ENCODE measurements at regions of chr20 and their contacts with region 1.

Region 1: GRCh38 chr20:8837396-8837795 is 231.5 kb upstream of the PLCB4 start:
- DNase-seq: no peak
- ATAC-seq: no peak
- H3K4me3 ChIP-seq: no peak overlapping the region
- H3K27ac ChIP-seq: no peak overlapping the region
- H3K4me1 ChIP-seq: no peaks in the 10 kb centered on the region
- H3K27me3 ChIP-seq: no peaks in the 10 kb centered on the region
- CTCF ChIP-seq: no peak
- POLR2A ChIP-seq: no peak
- RAD21 ChIP-seq: no peak

Region 2: DNA sequence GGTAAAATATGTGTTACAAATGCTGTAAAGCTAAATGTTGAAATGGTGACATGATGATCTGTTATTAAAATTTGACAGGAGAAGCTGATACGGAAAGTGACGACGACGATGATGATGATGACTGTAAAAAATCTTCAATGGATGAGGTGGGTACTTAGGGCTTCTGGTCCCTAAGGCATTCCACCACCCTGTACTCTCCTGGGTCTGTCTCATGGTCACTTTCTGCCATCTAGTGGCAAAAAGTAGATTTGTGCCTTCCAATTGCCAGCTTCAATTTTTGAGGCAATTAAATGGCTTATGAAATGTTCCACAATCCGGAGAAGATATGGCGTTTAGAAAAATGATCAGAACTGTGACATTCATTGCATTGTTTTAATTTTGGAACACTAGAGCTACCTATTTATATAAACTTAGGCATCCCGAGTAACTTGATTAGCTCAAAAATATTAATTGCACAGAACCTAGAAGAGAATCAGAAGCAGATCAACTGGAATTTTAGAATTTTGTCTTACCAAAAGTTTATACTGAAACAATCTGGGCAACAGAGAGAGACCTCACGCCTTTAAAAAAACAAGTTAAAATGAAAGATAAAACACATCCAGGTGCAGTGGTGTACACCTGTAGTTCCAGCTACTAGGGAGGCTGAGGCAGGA is 115.0 kb before region 1 on chr20:
- CTCF ChIA-PET with region 1: no interaction called
- POLR2A ChIA-PET with region 1: no interaction called
- RAD21 ChIA-PET with region 1: no interaction called
- intact Hi-C with region 1: no loop called
- DNase-seq: peak; percentile 59
- ATAC-seq: peak; percentile 91
- H3K4me3 ChIP-seq: no peak overlapping the region
- H3K27ac ChIP-seq: no peak overlapping the region
- H3K4me1 ChIP-seq: no peaks in the 10 kb centered on the region
- H3K27me3 ChIP-seq: no peaks in the 10 kb centered on the region
- CTCF ChIP-seq: peak; percentile 52 to 83 (median 71); a peak in 5 of 6 replicates
- POLR2A ChIP-seq: no peak
- RAD21 ChIP-seq: peak; percentile 82

Region 3: GRCh38 chr20:8879669-8880068 is 42.3 kb after region 1 on chr20:
- CTCF ChIA-PET with region 1: no interaction called
- POLR2A ChIA-PET with region 1: no interaction called
- RAD21 ChIA-PET with region 1: no interaction called
- intact Hi-C with region 1: loop called (anchors 1 kb)
- DNase-seq: no peak
- ATAC-seq: no peak
- H3K4me3 ChIP-seq: no peak overlapping the region
- H3K27ac ChIP-seq: no peak overlapping the region
- H3K4me1 ChIP-seq: no peaks in the 10 kb centered on the region
- H3K27me3 ChIP-seq: no peaks in the 10 kb centered on the region
- CTCF ChIP-seq: no peak
- POLR2A ChIP-seq: no peak
- RAD21 ChIP-seq: no peak

Measured in HCT116 (cell line).